Activated CD4-positive, alpha-beta T cell treated with anti-CD3 and anti-CD28 coated beads, Interleukin-2, amount 10 ng/mL, durations not matched to agents 7 days and 5 days (primary cell): ENCODE measurements at regions of chr17 and their contacts with region 1.

Region 1: DNA sequence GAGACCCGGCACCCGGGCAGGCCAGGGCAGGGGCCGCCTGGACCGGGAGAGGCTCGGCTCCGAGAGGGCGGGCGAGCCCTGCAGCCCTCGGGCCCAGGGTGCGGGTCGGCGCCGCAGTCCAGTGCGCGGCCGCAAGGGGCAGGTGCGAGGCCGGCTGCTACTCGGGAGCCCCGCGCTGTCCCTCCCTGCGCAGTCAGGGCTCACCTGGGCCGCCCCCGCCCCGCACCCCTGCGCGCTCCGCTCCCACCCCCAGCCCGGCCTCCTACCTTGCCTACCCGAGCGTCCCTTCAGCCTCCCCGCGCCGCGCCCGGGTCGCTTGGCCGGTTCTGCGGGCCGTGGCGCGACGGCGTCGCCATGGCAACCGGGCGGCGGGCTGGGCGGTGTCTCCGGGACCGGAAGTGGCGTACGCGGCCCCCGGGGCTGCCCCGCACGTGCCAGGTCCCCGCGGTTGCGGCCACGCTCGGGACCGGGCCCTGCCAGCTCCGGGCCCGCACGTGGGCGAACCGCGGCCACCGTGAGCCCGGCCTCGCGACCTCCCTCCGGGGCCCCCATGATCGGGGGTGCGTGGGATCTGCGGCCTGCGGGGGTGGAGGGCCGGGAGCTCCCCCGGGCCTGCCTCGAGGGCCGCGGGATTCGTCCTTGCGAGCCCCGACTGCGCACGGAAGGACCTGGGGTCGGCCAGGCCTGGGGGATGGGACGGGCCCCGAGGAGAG is at the start of gene CYB561:
- DNase-seq: peak; percentile 63
- H3K4me3 Mint-ChIP-seq: peak within 1 kb of the TSS; percentile 54
- H3K27ac Mint-ChIP-seq: peak within 1 kb of the TSS; percentile 83
- H3K4me1 Mint-ChIP-seq: peaks cover 32% of the 10 kb centered on the region
- H3K27me3 Mint-ChIP-seq: peaks cover 20% of the 10 kb centered on the region
- total RNA-seq, gene CYB561: 7.9 to 9.5 TPM

Region 2: DNA sequence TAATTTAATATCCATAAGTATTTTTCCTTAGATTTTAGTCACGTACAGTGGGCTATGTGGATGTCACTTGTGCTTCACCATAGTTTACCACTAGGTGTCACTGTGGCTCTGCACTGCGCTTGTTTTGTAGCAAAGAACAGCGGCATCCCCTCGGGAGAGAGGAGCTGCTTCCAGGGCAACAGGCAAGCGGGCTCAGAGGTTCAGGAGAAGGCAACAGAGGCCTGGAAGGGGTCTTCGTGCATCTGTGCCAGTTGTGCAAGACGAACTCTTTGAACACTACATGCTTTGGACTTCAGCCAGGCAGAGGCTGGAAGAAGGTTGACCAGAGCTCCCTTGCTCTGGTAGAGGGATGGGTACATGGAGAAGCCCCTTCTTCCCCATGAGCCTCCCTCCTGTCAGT is 20.7 kb before region 1 on chr17:
- CTCF ChIA-PET with region 1: interaction called, 57 read pairs
- POLR2A ChIA-PET with region 1: no interaction called
- DNase-seq: peak; percentile 81
- H3K4me3 Mint-ChIP-seq: no peak overlapping the region
- H3K27ac Mint-ChIP-seq: no peak overlapping the region
- H3K4me1 Mint-ChIP-seq: peaks cover 53% of the 10 kb centered on the region
- H3K27me3 Mint-ChIP-seq: peaks cover 2% of the 10 kb centered on the region

Region 3: DNA sequence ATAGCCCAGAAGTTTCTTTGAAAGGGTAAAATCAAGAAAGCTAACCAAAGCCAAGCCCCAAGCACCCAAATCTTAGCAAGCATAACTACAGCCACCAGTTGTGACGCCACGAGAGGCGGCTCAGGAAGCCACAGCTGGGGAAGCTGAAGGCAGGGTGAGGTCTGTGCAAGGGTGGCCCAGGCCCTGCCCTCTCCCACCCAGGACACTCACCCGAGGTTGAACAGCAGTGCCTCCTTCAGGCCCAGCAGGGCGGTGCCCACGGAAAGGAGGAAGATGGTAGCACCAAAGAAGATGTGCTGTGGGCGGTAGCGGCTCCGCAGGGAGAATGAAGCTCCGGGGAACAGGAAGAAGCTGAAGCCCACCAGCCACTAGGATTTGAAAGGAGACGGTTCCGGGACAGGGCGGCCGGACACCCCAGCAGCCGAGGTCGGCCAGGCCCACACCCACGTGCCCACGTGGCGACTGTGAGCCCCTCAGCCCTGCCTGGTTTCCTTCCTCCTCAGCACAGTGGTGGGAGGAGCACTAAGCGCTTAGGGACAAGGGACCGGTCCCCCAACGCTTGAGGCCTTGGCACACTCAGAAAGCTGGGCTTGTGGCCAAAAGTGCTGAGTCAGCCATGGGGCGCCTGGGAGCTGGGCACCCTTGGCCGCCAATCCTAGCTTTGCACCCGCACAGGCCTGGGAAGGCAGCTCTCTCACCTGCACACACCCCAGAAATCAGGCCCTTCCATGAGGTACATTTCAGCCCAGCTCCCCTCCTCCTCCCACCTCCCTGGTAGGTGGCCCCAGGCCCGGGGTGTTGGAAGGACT is 11.1 kb before region 1 on chr17:
- CTCF ChIA-PET with region 1: interaction called, 57 read pairs
- POLR2A ChIA-PET with region 1: no interaction called
- DNase-seq: peak; percentile 75
- H3K4me3 Mint-ChIP-seq: no peak overlapping the region
- H3K27ac Mint-ChIP-seq: peak overlapping the region; percentile 88
- H3K4me1 Mint-ChIP-seq: peaks cover 62% of the 10 kb centered on the region
- H3K27me3 Mint-ChIP-seq: no peaks in the 10 kb centered on the region